ENCODE measurements at regions of chr16 and their contacts with region 1.

Region 1: DNA sequence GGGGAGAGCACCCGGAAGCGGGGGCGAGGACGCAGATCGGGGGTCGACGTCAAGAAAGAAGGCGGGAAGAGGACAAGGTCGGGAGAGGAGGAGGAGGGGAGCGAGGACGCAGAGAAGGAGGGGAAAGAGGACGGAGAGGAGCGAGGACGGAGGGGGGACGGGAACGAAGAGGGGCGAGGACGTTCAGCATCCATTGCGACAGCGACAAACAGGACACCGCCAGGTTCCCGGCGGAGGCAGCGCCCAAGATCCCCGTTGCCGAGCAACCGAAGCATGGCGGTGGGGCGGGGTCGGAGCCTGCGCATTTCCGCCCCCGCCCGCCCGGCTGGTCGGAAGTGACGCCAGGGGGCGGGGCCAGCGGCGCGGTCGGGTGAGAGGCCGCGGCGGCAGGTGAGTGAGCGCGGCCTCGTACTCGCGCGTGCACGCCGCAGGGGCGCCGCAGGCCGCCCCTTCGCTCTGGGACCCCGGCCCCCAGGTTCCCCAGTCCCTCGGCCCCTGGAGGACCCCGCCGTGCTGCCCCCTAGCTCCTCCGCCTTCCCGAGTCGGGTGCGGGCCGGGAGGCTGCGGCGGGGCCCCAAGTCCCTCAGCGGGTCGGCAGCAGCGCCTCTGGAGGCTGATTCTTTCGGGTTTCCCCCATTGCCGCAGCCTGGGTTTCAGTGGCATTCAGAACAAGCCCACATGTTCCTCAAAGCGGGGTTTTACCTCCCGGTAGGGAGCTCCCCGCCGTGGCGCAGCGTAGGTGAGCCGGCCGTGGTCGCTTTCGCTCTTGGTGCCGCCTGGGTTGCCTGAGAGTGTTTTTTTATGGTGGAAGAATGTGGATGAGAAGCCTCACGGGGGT is at the start of gene FAM234A:
- DNase-seq: peak; percentile 97
- ATAC-seq: peak; percentile 86
- H3K4me3 Mint-ChIP-seq: peak within 1 kb of the TSS; percentile 90
- H3K27ac Mint-ChIP-seq: peak within 1 kb of the TSS; percentile 99
- H3K4me1 Mint-ChIP-seq: peaks cover 19% of the 10 kb centered on the region
- H3K27me3 Mint-ChIP-seq: no peaks in the 10 kb centered on the region
- CTCF ChIP-seq: peak; percentile 59
- total RNA-seq, gene FAM234A: 18.3 to 21.5 TPM

Region 2: DNA sequence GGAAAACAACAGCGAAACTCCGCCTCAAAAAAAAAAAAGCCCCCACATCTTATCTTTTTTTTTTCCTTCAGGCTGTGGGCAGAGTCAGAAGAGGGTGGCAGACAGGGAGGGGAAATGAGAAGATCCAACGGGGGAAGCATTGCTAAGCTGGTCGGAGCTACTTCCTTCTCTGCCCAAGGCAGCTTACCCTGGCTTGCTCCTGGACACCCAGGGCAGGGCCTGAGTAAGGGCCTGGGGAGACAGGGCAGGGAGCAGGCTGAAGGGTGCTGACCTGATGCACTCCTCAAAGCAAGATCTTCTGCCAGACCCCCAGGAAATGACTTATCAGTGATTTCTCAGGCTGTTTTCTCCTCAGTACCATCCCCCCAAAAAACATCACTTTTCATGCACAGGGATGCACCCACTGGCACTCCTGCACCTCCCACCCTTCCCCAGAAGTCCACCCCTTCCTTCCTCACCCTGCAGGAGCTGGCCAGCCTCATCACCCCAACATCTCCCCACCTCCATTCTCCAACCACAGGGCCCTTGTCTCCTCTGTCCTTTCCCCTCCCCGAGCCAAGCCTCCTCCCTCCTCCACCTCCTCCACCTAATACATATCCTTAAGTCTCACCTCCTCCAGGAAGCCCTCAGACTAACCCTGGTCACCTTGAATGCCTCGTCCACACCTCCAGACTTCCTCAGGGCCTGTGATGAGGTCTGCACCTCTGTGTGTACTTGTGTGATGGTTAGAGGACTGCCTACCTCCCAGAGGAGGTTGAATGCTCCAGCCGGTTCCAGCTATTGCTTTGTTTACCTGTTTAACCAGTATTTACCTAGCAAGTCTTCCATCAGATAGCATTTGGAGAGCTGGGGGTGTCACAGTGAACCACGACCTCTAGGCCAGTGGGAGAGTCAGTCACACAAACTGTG is 59.4 kb before region 1 on chr16:
- CTCF ChIA-PET with region 1: no interaction called
- POLR2A ChIA-PET with region 1: no interaction called
- intact Hi-C with region 1: no loop called
- DNase-seq: no peak
- ATAC-seq: no peak
- H3K4me3 Mint-ChIP-seq: no peak overlapping the region
- H3K27ac Mint-ChIP-seq: no peak overlapping the region
- H3K4me1 Mint-ChIP-seq: peaks cover 20% of the 10 kb centered on the region
- H3K27me3 Mint-ChIP-seq: peaks cover 56% of the 10 kb centered on the region
- CTCF ChIP-seq: no peak

Region 3: DNA sequence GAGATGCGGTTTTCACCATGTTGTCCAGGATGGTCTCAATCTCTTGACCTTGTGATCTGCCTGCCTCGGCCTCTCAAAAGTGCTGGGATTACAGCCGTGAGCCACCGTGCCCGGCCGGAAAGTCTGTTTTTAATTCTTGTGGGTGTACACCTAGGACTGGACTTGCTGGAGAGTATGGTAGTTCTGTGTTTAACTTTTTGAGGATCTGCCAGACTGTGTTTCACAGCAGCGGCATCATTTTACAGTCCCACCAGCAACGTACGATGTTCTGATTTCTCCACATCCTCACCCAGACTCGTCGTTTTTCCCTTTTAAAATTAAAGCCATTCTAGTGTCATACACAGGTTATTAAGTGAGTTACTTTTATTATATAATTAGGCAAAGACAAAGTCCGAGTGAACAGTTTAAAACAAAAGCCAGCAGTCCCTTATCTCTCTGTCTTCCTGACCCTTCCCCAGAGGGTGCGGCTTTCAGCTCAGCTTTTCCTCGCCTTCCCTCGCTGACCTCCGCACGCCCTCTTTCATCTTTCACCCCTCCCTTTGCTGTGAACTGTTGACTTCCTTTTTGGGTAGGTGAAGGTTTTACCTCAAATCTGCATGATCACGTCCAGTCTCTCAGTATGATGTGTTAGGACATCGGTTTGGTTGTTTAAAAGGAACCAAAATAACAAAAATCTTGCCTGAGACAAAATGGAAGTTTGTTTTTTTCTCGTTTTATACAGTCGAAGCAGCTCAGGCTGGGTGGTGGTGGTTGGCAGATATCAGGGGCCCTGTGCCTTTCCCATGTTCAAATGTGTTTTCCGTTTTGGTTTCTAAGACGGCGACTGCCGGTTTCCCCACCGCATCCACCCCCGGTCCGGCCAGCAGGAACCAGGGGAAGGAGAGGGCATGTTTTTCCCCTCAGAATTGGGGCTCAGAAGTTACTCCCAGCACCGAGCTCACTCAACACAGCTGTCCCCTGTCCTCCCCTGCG is 18.0 kb after region 1 on chr16:
- CTCF ChIA-PET with region 1: interaction called, 11 read pairs
- POLR2A ChIA-PET with region 1: interaction called, 7 read pairs
- intact Hi-C with region 1: no loop called
- DNase-seq: peak; percentile 63
- ATAC-seq: peak; percentile 81
- H3K4me3 Mint-ChIP-seq: peak overlapping the region; percentile 70
- H3K27ac Mint-ChIP-seq: peak overlapping the region; percentile 92
- H3K4me1 Mint-ChIP-seq: peaks cover 27% of the 10 kb centered on the region
- H3K27me3 Mint-ChIP-seq: no peaks in the 10 kb centered on the region
- CTCF ChIP-seq: no peak

Region 4: GRCh38 chr16:324451-325334 is 90.0 kb after region 1 on chr16:
- CTCF ChIA-PET with region 1: interaction called, 3 read pairs
- POLR2A ChIA-PET with region 1: no interaction called
- intact Hi-C with region 1: loop called (anchors 5 kb)
- DNase-seq: peak; percentile 64
- ATAC-seq: peak; percentile 52
- H3K4me3 Mint-ChIP-seq: peak overlapping the region; percentile 61
- H3K27ac Mint-ChIP-seq: peak overlapping the region; percentile 64
- H3K4me1 Mint-ChIP-seq: peaks cover 48% of the 10 kb centered on the region
- H3K27me3 Mint-ChIP-seq: no peaks in the 10 kb centered on the region
- CTCF ChIP-seq: no peak

Region 5: GRCh38 chr16:352547-353403 is 118.1 kb after region 1 on chr16 and contains the start of gene AXIN1:
- CTCF ChIA-PET with region 1: interaction called, 4 read pairs
- POLR2A ChIA-PET with region 1: interaction called, 7 read pairs
- intact Hi-C with region 1: loop called (anchors 10 kb)
- DNase-seq: peak; percentile 100
- ATAC-seq: peak; percentile 92
- H3K4me3 Mint-ChIP-seq: peak within 1 kb of the TSS; percentile 80
- H3K27ac Mint-ChIP-seq: peak within 1 kb of the TSS; percentile 84
- H3K4me1 Mint-ChIP-seq: peaks cover 49% of the 10 kb centered on the region
- H3K27me3 Mint-ChIP-seq: no peaks in the 10 kb centered on the region
- CTCF ChIP-seq: no peak
- total RNA-seq, gene AXIN1: 24.1 to 24.9 TPM

Measured in activated CD8-positive, alpha-beta T cell treated with anti-CD3 and anti-CD28 coated beads for 36 hours (primary cell).